ENCODE measurements at regions of chr10 and their contacts with region 1.

Region 1: GRCh38 chr10:93080350-93081046 is 6.8 kb downstream of the CYP26A1 start:
- DNase-seq: peak in 1 of 2 donors; percentile 74
- H3K4me3 ChIP-seq: no peak overlapping the region
- H3K27ac ChIP-seq: no peak overlapping the region
- H3K4me1 ChIP-seq: no peaks in the 10 kb centered on the region
- H3K27me3 ChIP-seq: no peaks in the 10 kb centered on the region
- CTCF ChIP-seq: peak; percentile 64 to 81 (median 78)

Region 2: GRCh38 chr10:93288654-93289634 is 208.4 kb after region 1 on chr10:
- intact Hi-C with region 1: loop called (anchors 1 kb)
- DNase-seq: peak in 1 of 2 donors; percentile 87
- H3K4me3 ChIP-seq: no peak overlapping the region
- H3K27ac ChIP-seq: peak overlapping the region in 1 of 2 donors; percentile 14
- H3K4me1 ChIP-seq: peaks cover 0 to 4% of the 10 kb centered on the region in 2 donors
- H3K27me3 ChIP-seq: no peaks in the 10 kb centered on the region
- CTCF ChIP-seq: peak; percentile 65 to 83 (median 67)

Region 3: GRCh38 chr10:93352638-93353383 is 272.3 kb after region 1 on chr10:
- intact Hi-C with region 1: loop called (anchors 5 kb)
- DNase-seq: no peak
- H3K4me3 ChIP-seq: no peak overlapping the region
- H3K27ac ChIP-seq: peak overlapping the region in 1 of 2 donors; percentile 29
- H3K4me1 ChIP-seq: no peaks in the 10 kb centered on the region
- H3K27me3 ChIP-seq: no peaks in the 10 kb centered on the region
- CTCF ChIP-seq: peak; percentile 58 to 72 (median 66)

Region 4: GRCh38 chr10:93515071-93516005 is 434.8 kb after region 1 on chr10:
- intact Hi-C with region 1: loop called (anchors 5 kb)
- DNase-seq: no peak
- H3K4me3 ChIP-seq: peak overlapping the region in 1 of 2 donors; percentile 5
- H3K27ac ChIP-seq: peak overlapping the region; percentile 85 to 88
- H3K4me1 ChIP-seq: peaks cover 7 to 21% of the 10 kb centered on the region in 2 donors
- H3K27me3 ChIP-seq: no peaks in the 10 kb centered on the region
- CTCF ChIP-seq: no peak